T-cell (primary cell): ENCODE measurements at regions of chr1 and their contacts with region 1.

Region 1: DNA sequence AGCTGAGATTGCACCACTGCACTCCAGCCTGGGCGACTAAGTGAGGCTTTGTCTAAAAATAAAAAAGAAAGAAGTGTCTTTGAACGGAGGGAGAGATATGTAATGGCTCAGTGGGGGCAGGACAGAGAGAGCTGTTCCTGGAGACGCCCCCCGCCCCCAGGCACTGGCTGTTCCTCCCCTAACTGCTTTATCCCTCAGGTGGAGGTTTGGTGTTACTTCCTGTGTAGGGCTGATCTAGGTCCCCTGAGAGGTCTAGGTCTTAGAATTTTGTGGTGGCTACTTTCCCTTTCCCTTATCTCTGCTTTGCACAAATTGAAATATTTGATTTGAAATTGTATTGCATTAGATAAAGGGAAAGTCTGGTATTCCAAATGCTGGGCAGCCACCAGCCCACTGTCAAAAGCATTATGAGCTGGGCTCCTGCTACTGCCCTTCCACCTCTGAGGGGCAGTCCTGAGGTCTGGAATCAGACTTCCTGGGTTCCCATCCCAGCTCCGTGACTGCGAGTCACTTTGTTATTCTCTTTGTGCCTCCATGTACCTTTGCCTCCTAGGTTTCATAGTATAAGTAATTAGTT is 134.8 kb upstream of the KIF26B start:
- DNase-seq: no peak
- ATAC-seq: no peak
- H3K4me3 ChIP-seq: no peak overlapping the region
- H3K4me3 Mint-ChIP-seq: no peak overlapping the region
- H3K27ac ChIP-seq: no peak overlapping the region
- H3K27ac Mint-ChIP-seq: no peak overlapping the region
- H3K4me1 ChIP-seq: no peaks in the 10 kb centered on the region
- H3K4me1 Mint-ChIP-seq: peaks cover 0 to 5% (median 0%) of the 10 kb centered on the region in 3 donors
- H3K27me3 ChIP-seq: no peaks in the 10 kb centered on the region
- H3K27me3 Mint-ChIP-seq: no peaks in the 10 kb centered on the region

Region 2: DNA sequence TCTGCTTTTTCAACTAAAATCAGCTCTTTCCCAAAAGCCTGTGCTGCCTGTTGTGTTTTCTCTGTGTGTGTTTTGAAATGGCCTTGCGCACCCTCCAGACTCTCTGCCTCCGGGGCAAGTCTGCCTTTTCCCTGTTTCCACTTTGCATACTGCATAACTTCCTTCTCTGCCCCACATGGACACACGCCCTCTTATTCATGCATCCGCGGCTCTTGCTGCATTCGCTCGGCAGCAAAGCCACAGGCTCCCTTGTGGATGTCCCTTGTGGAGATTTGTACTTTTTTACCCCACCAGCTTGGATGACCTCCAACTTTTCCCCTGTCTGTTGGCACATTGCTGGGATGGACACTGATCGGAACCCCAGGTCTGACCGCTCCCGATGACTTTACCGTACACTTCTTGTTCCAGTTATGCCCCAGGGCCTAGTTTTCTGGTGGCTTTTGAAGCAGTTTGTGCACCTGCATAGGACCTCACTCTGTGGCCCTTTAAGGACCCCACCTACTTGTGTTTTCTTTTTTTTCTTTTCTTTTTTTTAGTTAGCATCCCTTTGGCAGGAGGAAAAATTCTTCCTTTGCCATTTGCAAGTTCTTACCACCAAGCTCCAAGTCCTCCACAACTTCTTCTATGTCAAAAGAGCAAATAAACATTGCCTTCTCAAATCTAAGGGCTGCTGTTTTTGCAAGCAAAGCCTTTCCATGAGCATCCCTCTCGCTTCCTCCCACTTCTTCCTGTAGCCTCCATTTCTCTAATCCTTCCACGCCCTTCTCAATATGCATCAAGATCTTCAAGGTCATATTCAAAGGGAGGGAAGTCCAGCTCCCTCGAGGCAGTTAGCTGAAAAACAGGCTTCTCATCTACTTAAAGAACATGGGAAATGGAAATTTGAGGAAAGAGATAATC is 715.6 kb before region 1 on chr1:
- CTCF ChIA-PET with region 1: no interaction called
- POLR2A ChIA-PET with region 1: interaction called in 1 of 2 experiments, 10 read pairs
- DNase-seq: no peak
- ATAC-seq: no peak
- H3K4me3 ChIP-seq: no peak overlapping the region
- H3K4me3 Mint-ChIP-seq: no peak overlapping the region
- H3K27ac ChIP-seq: no peak overlapping the region
- H3K27ac Mint-ChIP-seq: no peak overlapping the region
- H3K4me1 ChIP-seq: peaks cover 0 to 7% of the 10 kb centered on the region in 2 experiments
- H3K4me1 Mint-ChIP-seq: peaks cover 3 to 5% (median 4%) of the 10 kb centered on the region in 3 donors
- H3K27me3 ChIP-seq: no peaks in the 10 kb centered on the region
- H3K27me3 Mint-ChIP-seq: no peaks in the 10 kb centered on the region

Region 3: GRCh38 chr1:244801246-244801645 is 218.8 kb before region 1 on chr1:
- CTCF ChIA-PET with region 1: interaction called in 1 of 2 experiments, 11 read pairs
- POLR2A ChIA-PET with region 1: no interaction called
- DNase-seq: peak; percentile 9 to 77 (median 43)
- ATAC-seq: peak; percentile 82 to 93 (median 89)
- H3K4me3 ChIP-seq: no peak overlapping the region
- H3K4me3 Mint-ChIP-seq: no peak overlapping the region
- H3K27ac ChIP-seq: no peak overlapping the region
- H3K27ac Mint-ChIP-seq: no peak overlapping the region
- H3K4me1 ChIP-seq: peaks cover 0 to 6% of the 10 kb centered on the region in 2 experiments
- H3K4me1 Mint-ChIP-seq: peaks cover 2 to 8% (median 3%) of the 10 kb centered on the region in 3 donors
- H3K27me3 ChIP-seq: peaks cover 0 to 7% of the 10 kb centered on the region in 2 experiments
- H3K27me3 Mint-ChIP-seq: no peaks in the 10 kb centered on the region